ENCODE measurements at regions of chr3 and their contacts with region 1.

Region 1: DNA sequence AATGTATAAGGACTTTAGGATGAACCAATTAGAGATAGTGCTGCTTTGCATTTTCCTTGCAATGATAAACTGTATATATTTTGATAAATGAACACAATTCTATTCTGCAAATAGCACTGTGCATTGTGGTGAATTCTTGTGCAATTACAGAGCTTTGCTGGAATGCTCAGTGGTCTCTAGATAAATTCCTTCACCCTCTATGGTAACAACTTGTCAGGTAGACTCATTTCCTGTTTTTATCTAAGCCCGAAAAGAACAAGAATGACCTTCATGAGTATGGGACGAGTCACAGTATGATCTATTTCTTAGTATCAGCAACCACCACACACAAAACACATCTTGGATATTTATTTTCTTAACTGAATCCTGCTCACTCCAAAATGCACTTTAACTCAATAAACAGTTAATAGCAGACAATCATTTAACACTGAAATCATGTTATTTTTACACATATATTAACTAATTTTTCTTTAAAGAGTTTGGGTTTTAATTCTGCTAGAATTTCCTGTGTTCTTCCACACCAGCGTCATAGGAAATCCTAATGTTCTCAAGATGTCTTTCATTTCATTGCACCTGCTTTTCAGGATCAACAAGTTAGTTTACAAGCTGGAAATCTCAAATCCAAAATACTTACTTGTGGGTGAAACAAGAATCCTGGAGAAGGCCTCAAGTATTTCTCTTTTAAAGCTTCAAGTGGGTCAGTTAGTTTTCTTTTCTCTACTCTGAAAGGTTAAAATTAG is 551.2 kb downstream of the MECOM start:
- DNase-seq: peak; percentile 83
- H3K4me3 ChIP-seq: no peak overlapping the region
- H3K27ac ChIP-seq: peak overlapping the region; percentile 90
- H3K4me1 ChIP-seq: peaks cover 31% of the 10 kb centered on the region
- H3K27me3 ChIP-seq: no peaks in the 10 kb centered on the region
- CTCF ChIP-seq: no peak

Region 2: GRCh38 chr3:169041677-169042171 is 70.6 kb before region 1 on chr3:
- CTCF ChIA-PET with region 1: no interaction called
- dilution Hi-C with region 1: no loop called
- in situ Hi-C with region 1: no loop called
- intact Hi-C with region 1: loop called (anchors 5 kb)
- DNase-seq: peak; percentile 43
- H3K4me3 ChIP-seq: no peak overlapping the region
- H3K27ac ChIP-seq: peak overlapping the region; percentile 37
- H3K4me1 ChIP-seq: peaks cover 33% of the 10 kb centered on the region
- H3K27me3 ChIP-seq: no peaks in the 10 kb centered on the region
- CTCF ChIP-seq: peak; percentile 63 to 68

Region 3: GRCh38 chr3:169085827-169086226 is 26.5 kb before region 1 on chr3:
- CTCF ChIA-PET with region 1: no interaction called
- dilution Hi-C with region 1: no loop called
- in situ Hi-C with region 1: no loop called
- intact Hi-C with region 1: loop called (anchors 2 kb)
- DNase-seq: peak; percentile 89
- H3K4me3 ChIP-seq: peak overlapping the region in 1 of 3 experiments; percentile 28
- H3K27ac ChIP-seq: peak overlapping the region; percentile 95
- H3K4me1 ChIP-seq: peaks cover 26% of the 10 kb centered on the region
- H3K27me3 ChIP-seq: no peaks in the 10 kb centered on the region
- CTCF ChIP-seq: no peak

Measured in mammary epithelial cell (primary cell).